Calu3 (cell line): ENCODE measurements at regions of chrX and their contacts with region 1.

Region 1: DNA sequence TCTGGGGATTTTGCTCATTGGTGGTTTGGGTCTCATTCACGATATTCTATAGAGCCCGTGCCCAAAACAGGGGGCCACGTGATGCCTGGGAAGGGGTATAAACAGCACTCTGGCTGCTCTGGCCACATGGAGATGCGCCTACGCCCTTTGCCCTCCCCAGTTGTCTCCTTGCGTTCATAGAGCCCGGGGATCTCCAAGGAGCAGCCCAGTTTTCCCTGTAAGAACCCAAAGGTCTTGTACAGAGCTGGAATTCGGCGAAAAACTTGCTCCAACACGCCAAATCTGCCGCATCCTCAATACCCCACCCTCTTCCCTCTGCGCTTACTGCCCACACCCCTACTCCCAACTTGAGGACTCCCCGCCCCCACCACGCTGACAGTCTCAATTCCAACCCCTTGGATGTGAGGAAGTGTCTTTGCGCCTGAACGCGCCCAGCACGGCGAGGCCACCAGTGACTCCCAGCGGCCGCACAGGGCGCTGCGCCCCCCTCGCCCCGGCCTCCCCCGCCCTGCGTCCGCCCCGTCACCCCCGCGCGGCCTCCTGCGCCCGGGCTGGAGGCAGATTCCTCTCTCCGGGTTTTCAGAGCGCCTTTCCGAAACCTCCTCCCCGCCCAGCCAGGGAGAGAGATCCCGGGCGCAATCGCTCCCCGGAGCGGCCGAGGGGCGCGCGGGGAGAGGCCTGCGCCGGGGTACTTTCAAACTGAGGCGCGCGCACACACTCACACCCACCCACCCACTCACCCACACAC is at the start of gene NHS:
- DNase-seq: peak; percentile 84
- H3K4me3 Mint-ChIP-seq: peak within 1 kb of the TSS; percentile 87
- H3K27ac Mint-ChIP-seq: peak within 1 kb of the TSS; percentile 60
- H3K4me1 Mint-ChIP-seq: peaks cover 21% of the 10 kb centered on the region
- H3K27me3 Mint-ChIP-seq: no peaks in the 10 kb centered on the region
- CTCF ChIP-seq: peak; percentile 64
- total RNA-seq, gene NHS: 14.7 and 19.5 TPM in 2 replicates

Region 2: GRCh38 chrX:16786139-16786790 is 588.5 kb before region 1 on chrX and contains the start of gene TXLNG:
- CTCF ChIA-PET with region 1: no interaction called
- intact Hi-C with region 1: no loop called
- DNase-seq: peak; percentile 96
- H3K4me3 Mint-ChIP-seq: peak within 1 kb of the TSS; percentile 99
- H3K27ac Mint-ChIP-seq: peak within 1 kb of the TSS; percentile 88
- H3K4me1 Mint-ChIP-seq: peaks cover 14% of the 10 kb centered on the region
- H3K27me3 Mint-ChIP-seq: no peaks in the 10 kb centered on the region
- CTCF ChIP-seq: no peak
- total RNA-seq, gene TXLNG: 22.0 and 22.2 TPM in 2 replicates

Region 3: GRCh38 chrX:17405225-17405969 is 30.6 kb after region 1 on chrX:
- CTCF ChIA-PET with region 1: no interaction called
- intact Hi-C with region 1: loop called (anchors 1 kb)
- DNase-seq: peak; percentile 44
- H3K4me3 Mint-ChIP-seq: peak overlapping the region; percentile 15
- H3K27ac Mint-ChIP-seq: peak overlapping the region; percentile 52
- H3K4me1 Mint-ChIP-seq: peaks cover 39% of the 10 kb centered on the region
- H3K27me3 Mint-ChIP-seq: no peaks in the 10 kb centered on the region
- CTCF ChIP-seq: no peak

Region 4: GRCh38 chrX:17413228-17413627 is 38.4 kb after region 1 on chrX:
- CTCF ChIA-PET with region 1: no interaction called
- intact Hi-C with region 1: loop called (anchors 2 kb)
- DNase-seq: no peak
- H3K4me3 Mint-ChIP-seq: peak overlapping the region; percentile 64
- H3K27ac Mint-ChIP-seq: peak overlapping the region; percentile 95
- H3K4me1 Mint-ChIP-seq: peaks cover 48% of the 10 kb centered on the region
- H3K27me3 Mint-ChIP-seq: no peaks in the 10 kb centered on the region
- CTCF ChIP-seq: no peak

Region 5: GRCh38 chrX:17527135-17527701 is 152.4 kb after region 1 on chrX:
- CTCF ChIA-PET with region 1: no interaction called
- intact Hi-C with region 1: loop called (anchors 5 kb)
- DNase-seq: peak; percentile 3
- H3K4me3 Mint-ChIP-seq: peak overlapping the region; percentile 30
- H3K27ac Mint-ChIP-seq: no peak overlapping the region
- H3K4me1 Mint-ChIP-seq: peaks cover 27% of the 10 kb centered on the region
- H3K27me3 Mint-ChIP-seq: no peaks in the 10 kb centered on the region
- CTCF ChIP-seq: no peak